HEK293 (cell line): ENCODE measurements at regions of chr5 and their contacts with region 1.

Region 1: GRCh38 chr5:57650360-57651069 is 167.9 kb upstream of the ACTBL2 start:
- H3K4me3 ChIP-seq: no peak overlapping the region
- H3K27ac ChIP-seq: no peak overlapping the region
- H3K4me1 ChIP-seq: no peaks in the 10 kb centered on the region
- CTCF ChIP-seq: no peak

Region 2: GRCh38 chr5:57635146-57635777 is 15.3 kb before region 1 on chr5:
- CTCF ChIA-PET with region 1: interaction called, 16 read pairs
- POLR2A ChIA-PET with region 1: no interaction called
- H3K4me3 ChIP-seq: no peak overlapping the region
- H3K27ac ChIP-seq: no peak overlapping the region
- H3K4me1 ChIP-seq: no peaks in the 10 kb centered on the region
- CTCF ChIP-seq: no peak

Region 3: GRCh38 chr5:57662991-57663390 is 12.5 kb after region 1 on chr5:
- CTCF ChIA-PET with region 1: interaction called, 12 read pairs
- POLR2A ChIA-PET with region 1: no interaction called
- H3K4me3 ChIP-seq: no peak overlapping the region
- H3K27ac ChIP-seq: no peak overlapping the region
- H3K4me1 ChIP-seq: no peaks in the 10 kb centered on the region
- CTCF ChIP-seq: no peak

Region 4: DNA sequence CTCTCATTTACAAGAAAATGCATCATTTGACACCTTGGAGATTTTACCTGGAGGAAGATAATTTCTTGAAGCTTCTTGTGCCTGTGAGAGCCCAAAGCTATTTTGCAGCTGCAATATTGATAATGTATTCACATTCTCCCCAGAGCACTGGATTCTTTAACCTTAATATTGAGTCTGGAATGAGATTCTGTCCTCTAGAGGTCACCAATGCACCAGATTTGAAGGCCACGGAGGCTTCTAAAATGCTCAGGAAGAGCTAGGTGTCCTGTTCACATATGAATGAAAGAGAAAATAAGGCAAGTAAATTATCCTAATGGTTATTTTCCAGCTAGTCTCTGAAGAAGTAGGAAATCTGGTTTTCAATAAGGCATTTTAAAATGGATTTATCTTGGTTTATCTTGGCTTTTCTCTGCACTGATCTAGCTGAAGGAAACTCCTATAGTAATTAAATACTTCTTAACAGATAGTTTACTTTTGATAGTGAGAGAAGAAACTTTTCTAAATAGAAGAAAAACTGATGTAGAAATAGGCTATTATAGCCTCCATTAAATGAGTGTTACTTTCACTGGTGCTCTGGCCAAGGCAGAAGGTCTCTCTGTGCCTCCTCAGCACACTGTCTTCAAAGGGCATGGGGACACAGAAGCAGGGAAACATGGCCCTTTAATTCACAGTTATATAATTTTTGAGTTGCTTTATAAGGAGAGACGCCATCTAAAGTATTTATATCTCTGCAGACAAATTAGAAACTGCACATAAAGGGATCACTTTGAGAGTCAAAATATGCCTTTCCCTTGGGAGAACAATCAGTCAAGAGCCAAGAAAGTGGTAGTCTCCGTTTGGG is 129.1 kb after region 1 on chr5:
- CTCF ChIA-PET with region 1: interaction called, 19 read pairs
- POLR2A ChIA-PET with region 1: no interaction called
- H3K4me3 ChIP-seq: no peak overlapping the region
- H3K27ac ChIP-seq: no peak overlapping the region
- H3K4me1 ChIP-seq: peaks cover 24% of the 10 kb centered on the region
- CTCF ChIP-seq: peak; percentile 27; the same call in 1 of the 2 replicates

Region 5: GRCh38 chr5:58460732-58461286 is 810.3 kb after region 1 on chr5:
- CTCF ChIA-PET with region 1: interaction called, 11 read pairs
- POLR2A ChIA-PET with region 1: interaction called, 3 read pairs
- H3K4me3 ChIP-seq: peak overlapping the region; percentile 98
- H3K27ac ChIP-seq: peak overlapping the region; percentile 98
- H3K4me1 ChIP-seq: no peaks in the 10 kb centered on the region
- CTCF ChIP-seq: peak; percentile 81